Endothelial cell of umbilical vein (primary cell): ENCODE measurements at regions of chr9 and their contacts with region 1.

Region 1: DNA sequence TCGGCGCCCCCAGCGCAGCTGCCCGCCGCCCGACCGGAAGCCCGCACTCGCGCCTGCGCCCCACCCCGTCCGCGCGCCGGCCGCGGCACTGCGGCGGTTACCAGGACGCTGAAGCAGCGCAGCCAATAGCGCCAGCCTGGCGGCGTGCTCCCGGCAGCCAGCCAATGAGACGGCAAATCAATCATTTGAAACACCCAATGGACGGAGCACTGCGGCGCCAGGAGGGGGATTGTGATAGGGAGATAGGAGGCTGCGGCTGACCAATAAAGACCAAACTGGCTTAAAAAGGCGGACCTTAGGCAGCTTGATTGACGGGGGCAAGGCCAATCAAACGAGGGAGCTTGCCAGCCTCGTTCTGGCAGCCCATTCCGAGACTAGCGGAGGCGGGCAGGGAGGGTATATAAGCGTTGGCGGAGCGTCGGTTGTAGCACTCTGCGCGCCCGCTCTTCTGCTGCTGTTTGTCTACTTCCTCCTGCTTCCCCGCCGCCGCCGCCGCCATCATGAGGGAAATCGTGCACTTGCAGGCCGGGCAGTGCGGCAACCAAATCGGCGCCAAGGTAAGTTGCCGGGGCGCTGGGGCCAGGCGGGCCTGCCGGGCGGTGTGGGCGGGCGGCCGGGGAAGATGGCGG is at the start of gene TUBB4B:
- DNase-seq: peak; percentile 100
- H3K4me3 ChIP-seq: peak within 1 kb of the TSS; percentile 70 to 76 (median 73)
- H3K27ac ChIP-seq: peak within 1 kb of the TSS; percentile 71
- H3K4me1 ChIP-seq: peaks cover 13% of the 10 kb centered on the region
- H3K27me3 ChIP-seq: no peaks in the 10 kb centered on the region
- CTCF ChIP-seq: no peak
- POLR2A ChIP-seq: peak; percentile 99
- total RNA-seq, gene TUBB4B: 546 and 558 TPM in 2 replicates

Region 2: GRCh38 chr9:137046098-137046787 is 194.7 kb before region 1 on chr9 and contains the start of gene NPDC1:
- CTCF ChIA-PET with region 1: interaction called, 14 read pairs
- POLR2A ChIA-PET with region 1: no interaction called
- dilution Hi-C with region 1: no loop called
- intact Hi-C with region 1: no loop called
- DNase-seq: peak; percentile 79
- H3K4me3 ChIP-seq: peak within 1 kb of the TSS; percentile 44 to 57 (median 54)
- H3K27ac ChIP-seq: peak within 1 kb of the TSS; percentile 41
- H3K4me1 ChIP-seq: peaks cover 35% of the 10 kb centered on the region
- H3K27me3 ChIP-seq: peaks cover 0 to 3% of the 10 kb centered on the region in 2 experiments
- CTCF ChIP-seq: peak; percentile 94 to 96
- POLR2A ChIP-seq: peak; percentile 63
- total RNA-seq, gene NPDC1: 157 and 181 TPM in 2 replicates

Region 3: GRCh38 chr9:137114610-137115391 is 126.2 kb before region 1 on chr9 and contains the start of gene DPP7:
- CTCF ChIA-PET with region 1: interaction called, 26 read pairs
- POLR2A ChIA-PET with region 1: interaction called, 4 read pairs
- dilution Hi-C with region 1: no loop called
- intact Hi-C with region 1: no loop called
- DNase-seq: peak; percentile 33
- H3K4me3 ChIP-seq: peak within 1 kb of the TSS; percentile 32 to 61 (median 53)
- H3K27ac ChIP-seq: no peak within 1 kb of the TSS
- H3K4me1 ChIP-seq: peaks cover 4% of the 10 kb centered on the region
- H3K27me3 ChIP-seq: no peaks in the 10 kb centered on the region
- CTCF ChIP-seq: no peak
- POLR2A ChIP-seq: peak; percentile 35
- total RNA-seq, gene DPP7: 118 and 149 TPM in 2 replicates

Region 4: DNA sequence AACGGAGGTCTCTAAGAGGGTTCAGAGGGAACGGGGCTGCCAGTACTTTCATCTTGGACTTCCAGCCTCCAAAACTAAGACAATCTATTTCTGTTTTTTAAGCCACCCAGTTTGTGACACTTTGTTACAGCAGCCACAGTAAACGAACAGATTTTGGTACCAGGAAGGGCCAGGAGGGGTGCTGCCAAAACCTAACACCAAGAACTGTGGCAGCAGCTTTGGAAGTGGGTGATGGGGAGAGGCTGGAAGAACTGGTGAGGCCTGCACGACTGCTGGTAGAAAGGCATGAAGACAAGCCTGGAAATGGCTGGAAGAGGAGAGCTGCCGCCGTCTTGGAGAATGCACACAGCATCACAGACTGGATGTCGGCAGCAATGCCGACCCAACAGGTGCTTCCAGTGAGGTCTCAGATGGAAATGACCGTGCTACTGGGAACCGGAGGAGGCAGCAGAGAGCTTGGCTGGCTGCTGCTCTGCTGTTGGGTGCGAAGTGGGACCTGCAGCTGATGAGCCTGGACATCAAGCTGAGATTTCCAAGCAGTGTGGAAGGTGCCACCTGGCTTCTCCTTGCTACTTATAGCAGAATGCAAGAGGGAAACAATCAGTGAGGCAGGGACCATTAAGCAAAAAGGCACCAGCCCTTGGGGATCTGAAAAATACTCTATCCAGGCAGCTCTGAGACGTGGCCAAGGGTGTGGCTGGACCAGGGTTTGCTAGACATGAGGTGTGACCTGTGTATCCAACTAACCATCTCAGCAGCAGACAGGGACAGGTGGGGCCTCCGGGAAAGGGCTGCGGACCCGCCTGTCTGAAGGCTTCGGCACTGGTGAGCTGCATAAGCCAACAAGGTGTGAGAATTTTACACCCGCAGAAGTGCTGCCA is 64.4 kb before region 1 on chr9:
- CTCF ChIA-PET with region 1: interaction called, 26 read pairs
- POLR2A ChIA-PET with region 1: no interaction called
- dilution Hi-C with region 1: no loop called
- intact Hi-C with region 1: no loop called
- DNase-seq: peak; percentile 20
- H3K4me3 ChIP-seq: no peak overlapping the region
- H3K27ac ChIP-seq: no peak overlapping the region
- H3K4me1 ChIP-seq: peaks cover 6% of the 10 kb centered on the region
- H3K27me3 ChIP-seq: no peaks in the 10 kb centered on the region
- CTCF ChIP-seq: peak; percentile 48 to 66
- POLR2A ChIP-seq: no peak

Region 5: DNA sequence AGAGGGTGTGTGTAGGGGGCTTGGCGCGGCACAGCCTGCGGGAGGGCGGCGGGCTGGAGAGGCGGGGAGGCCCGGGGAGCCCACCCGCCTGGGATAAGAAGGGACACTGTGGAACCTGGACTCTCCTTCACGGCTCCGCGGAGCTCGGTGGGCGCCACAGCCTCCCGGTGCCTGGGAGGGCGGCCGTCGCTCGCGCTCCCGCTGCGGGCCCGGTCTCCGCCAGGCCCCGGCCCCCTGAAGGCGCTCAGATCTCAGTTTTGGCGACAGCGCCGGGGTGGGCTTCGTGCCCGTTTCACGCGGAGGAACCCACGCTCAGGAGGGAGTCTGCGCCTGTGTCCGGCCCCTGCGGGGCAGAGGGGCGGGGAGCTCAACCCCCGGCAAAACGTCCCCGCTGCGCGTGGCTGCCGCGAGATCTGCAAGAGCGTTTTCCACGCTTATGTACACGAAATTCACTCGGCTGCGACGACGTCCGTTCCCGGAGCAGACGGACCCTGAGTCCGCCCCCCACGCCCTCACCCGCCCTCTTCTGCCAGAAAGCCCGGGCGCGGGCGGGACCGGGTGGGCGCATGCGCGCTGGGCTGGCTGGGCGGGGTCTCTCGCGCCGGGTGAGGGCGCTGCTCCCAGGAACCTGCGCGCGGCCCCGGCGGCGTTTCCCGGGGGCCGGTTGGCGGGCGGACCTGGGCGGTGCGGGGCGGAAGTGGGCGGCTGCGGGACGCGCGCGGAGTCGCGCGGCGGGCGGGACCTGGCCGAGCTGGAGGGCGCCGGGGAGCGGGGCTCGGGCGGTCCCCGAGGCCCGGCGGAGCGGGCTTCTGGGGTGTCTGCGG is 13.9 kb after region 1 on chr9 and contains the start of gene NELFB:
- CTCF ChIA-PET with region 1: interaction called, 31 read pairs
- POLR2A ChIA-PET with region 1: interaction called, 66 read pairs
- dilution Hi-C with region 1: no loop called
- intact Hi-C with region 1: loop called (anchors 1 kb)
- DNase-seq: peak; percentile 75
- H3K4me3 ChIP-seq: peak within 1 kb of the TSS; percentile 41 to 94 (median 41)
- H3K27ac ChIP-seq: no peak within 1 kb of the TSS
- H3K4me1 ChIP-seq: peaks cover 14% of the 10 kb centered on the region
- H3K27me3 ChIP-seq: no peaks in the 10 kb centered on the region
- CTCF ChIP-seq: no peak
- POLR2A ChIP-seq: peak; percentile 85
- total RNA-seq, gene NELFB: 70.2 and 76.1 TPM in 2 replicates

Region 6: DNA sequence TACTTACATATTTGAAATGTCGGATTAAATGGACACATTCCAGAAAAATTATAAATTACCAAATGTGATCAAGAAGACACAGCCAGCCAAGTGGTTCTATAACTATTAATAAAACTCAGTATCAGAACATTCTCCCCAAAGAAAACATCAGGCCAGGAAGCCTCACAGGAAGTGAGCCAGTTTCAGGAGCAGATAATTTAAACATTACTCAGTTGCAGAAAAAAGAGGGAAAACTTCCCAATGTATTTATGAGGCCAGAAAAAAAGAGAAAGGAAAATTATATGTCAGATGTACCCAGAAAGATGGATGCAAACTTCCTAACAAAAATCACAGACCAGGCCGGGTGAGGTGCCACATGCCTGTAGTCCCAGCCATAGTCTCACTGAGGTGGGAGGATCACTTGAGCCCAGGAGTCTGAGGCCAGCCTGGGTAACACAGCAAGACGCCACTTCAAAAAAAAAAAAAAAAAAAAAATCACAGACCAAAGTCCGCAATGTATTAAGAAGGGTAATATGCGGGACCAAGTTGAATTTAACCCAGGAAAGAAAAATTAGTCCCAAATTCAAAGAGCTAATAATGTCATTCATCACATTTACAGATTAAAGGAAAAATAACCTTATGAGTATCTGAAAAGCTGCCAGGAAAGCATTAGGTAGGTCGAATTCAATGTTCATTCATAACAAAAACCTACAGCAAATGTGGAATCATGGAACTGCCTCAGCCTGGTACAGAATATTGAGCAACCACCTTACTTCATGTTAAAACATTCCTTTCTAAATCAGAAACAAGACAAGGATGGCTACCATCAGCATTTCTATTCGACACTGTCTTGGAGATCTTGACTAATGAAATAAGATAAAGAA is 98.3 kb after region 1 on chr9:
- CTCF ChIA-PET with region 1: no interaction called
- POLR2A ChIA-PET with region 1: no interaction called
- dilution Hi-C with region 1: no loop called
- intact Hi-C with region 1: no loop called
- DNase-seq: peak; percentile 81
- H3K4me3 ChIP-seq: peak overlapping the region in 1 of 3 experiments; percentile 56
- H3K27ac ChIP-seq: peak overlapping the region; percentile 94
- H3K4me1 ChIP-seq: peaks cover 26% of the 10 kb centered on the region
- H3K27me3 ChIP-seq: no peaks in the 10 kb centered on the region
- CTCF ChIP-seq: no peak
- POLR2A ChIP-seq: no peak